ENCODE measurements at regions of chr1 and their contacts with region 1.

Region 1: DNA sequence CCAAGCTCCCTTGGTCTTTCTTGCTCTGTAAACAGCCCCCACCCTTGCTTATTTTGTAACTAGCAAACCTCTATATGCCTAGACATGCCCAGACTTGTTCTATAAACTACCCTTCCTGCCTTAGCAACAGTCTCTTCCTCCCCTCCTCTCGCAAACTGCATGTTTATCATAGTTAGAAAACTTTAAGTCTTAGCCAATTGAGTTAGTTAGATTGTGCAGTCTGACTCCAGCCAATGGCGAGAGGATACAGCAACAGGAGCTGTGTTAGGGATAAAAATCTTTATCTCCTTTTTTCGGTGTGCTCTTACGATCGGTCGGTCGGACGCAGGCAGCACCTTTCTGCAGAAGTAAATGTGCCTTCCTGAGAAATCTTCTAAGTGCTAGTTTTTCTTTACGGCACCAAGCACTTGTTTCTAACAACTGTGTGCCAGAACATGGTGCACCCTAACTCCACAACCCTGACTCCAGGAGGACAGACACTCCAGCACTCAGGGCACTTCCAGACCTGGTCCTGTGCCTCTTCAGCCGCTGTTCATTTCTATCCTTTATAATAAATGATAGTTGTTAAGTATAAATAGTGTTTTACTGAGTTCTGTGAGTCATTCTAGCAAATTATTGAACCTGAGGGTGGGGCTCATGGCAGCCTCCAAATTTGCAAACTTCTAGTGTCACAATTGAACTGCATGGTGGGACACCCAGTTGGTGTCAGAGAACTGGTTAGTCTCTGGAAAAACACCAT is 25.7 kb upstream of the GNG4 start:
- DNase-seq: no peak
- H3K4me3 Mint-ChIP-seq: no peak overlapping the region
- H3K27ac Mint-ChIP-seq: peak overlapping the region; percentile 80
- H3K4me1 Mint-ChIP-seq: peaks cover 7% of the 10 kb centered on the region
- H3K27me3 Mint-ChIP-seq: no peaks in the 10 kb centered on the region

Region 2: DNA sequence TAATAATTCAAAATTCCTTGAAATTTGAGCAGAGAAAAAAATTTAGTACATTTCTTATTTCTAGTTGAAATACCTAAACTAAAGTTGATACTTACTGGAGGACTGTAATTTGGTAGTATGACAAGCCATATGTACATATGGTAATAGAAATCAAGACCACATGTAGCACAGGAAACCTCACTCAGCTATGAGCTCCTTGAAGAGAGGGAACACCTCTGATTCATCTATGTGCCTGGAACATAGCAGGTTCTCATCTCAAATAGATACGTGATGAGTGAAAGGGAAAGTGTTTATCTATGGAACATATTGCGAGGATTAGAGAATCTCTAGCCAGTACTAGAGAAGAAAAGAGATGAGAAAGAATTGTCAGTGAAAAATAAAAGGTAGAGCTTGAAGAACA is 22.2 kb after region 1 on chr1:
- CTCF ChIA-PET with region 1: interaction called, 11 read pairs
- POLR2A ChIA-PET with region 1: no interaction called
- DNase-seq: no peak
- H3K4me3 Mint-ChIP-seq: no peak overlapping the region
- H3K27ac Mint-ChIP-seq: no peak overlapping the region
- H3K4me1 Mint-ChIP-seq: peaks cover 8% of the 10 kb centered on the region
- H3K27me3 Mint-ChIP-seq: no peaks in the 10 kb centered on the region

Region 3: GRCh38 chr1:235725434-235725833 is 50.1 kb after region 1 on chr1:
- CTCF ChIA-PET with region 1: no interaction called
- POLR2A ChIA-PET with region 1: no interaction called
- DNase-seq: no peak
- H3K4me3 Mint-ChIP-seq: no peak overlapping the region
- H3K27ac Mint-ChIP-seq: no peak overlapping the region
- H3K4me1 Mint-ChIP-seq: no peaks in the 10 kb centered on the region
- H3K27me3 Mint-ChIP-seq: no peaks in the 10 kb centered on the region

Region 4: GRCh38 chr1:235739124-235739523 is 63.8 kb after region 1 on chr1:
- CTCF ChIA-PET with region 1: no interaction called
- POLR2A ChIA-PET with region 1: no interaction called
- DNase-seq: no peak
- H3K4me3 Mint-ChIP-seq: no peak overlapping the region
- H3K27ac Mint-ChIP-seq: no peak overlapping the region
- H3K4me1 Mint-ChIP-seq: no peaks in the 10 kb centered on the region
- H3K27me3 Mint-ChIP-seq: no peaks in the 10 kb centered on the region